ENCODE measurements at regions of chr14 and their contacts with region 1.

Region 1: GRCh38 chr14:68979021-68979782 is at the start of gene ACTN1:
- DNase-seq: peak; percentile 96 to 98 (median 97)
- H3K4me3 ChIP-seq: peak within 1 kb of the TSS; percentile 67 to 89 (median 72)
- H3K27ac ChIP-seq: peak within 1 kb of the TSS; percentile 74 to 95 (median 92)
- H3K4me1 ChIP-seq: peaks cover 29 to 51% of the 10 kb centered on the region in 2 donors
- H3K27me3 ChIP-seq: no peaks in the 10 kb centered on the region
- CTCF ChIP-seq: peak in 1 of 6 experiments; percentile 6
- POLR2A ChIP-seq: peak; percentile 95 to 98
- total RNA-seq, gene ACTN1: 11.6 to 180 (median 95.3) TPM

Region 2: DNA sequence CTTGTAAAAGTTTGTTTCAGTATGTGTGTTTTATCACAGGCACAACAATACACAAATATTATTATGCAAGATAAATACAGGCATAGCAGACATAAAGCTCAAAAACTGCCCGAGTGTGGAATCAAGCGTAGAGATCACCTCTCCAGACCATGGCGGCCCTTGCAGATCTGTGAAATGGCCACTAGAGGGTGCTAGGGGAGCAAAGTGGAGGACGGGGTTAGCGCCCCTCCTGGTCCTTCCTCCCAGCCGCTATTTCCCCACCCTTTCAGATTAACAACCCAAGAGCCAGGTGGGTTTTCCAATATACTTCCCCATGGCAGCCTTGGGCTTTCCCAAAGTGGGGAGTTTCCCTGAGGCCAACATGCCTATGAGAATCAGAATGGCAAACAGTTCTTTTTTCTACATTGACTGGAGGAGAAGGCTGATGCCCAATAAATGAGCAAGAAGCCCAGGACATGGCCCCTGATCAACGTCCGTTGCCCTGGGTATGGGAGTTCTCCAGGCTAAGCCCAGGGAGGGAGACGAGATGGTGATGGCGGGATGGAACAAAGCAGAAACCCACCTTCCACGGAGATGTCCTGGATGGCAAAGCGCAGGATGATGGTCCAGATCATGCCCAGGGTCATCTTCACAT is 67.5 kb before region 1 on chr14:
- intact Hi-C with region 1: loop called in 1 of 2 experiments (anchors 10 kb)
- DNase-seq: peak; percentile 64 to 86 (median 72)
- H3K4me3 ChIP-seq: no peak overlapping the region
- H3K27ac ChIP-seq: no peak overlapping the region
- H3K4me1 ChIP-seq: no peaks in the 10 kb centered on the region
- H3K27me3 ChIP-seq: no peaks in the 10 kb centered on the region
- CTCF ChIP-seq: peak; percentile 94 to 98 (median 96)
- POLR2A ChIP-seq: no peak

Region 3: GRCh38 chr14:69048456-69048855 is 69.3 kb after region 1 on chr14:
- intact Hi-C with region 1: loop called in 1 of 2 experiments (anchors 5 kb)
- DNase-seq: peak; percentile 46 to 85 (median 76)
- H3K4me3 ChIP-seq: no peak overlapping the region
- H3K27ac ChIP-seq: peak overlapping the region in 1 of 5 donors; percentile 93
- H3K4me1 ChIP-seq: peaks cover 62 to 94% of the 10 kb centered on the region in 2 donors
- H3K27me3 ChIP-seq: no peaks in the 10 kb centered on the region
- CTCF ChIP-seq: no peak
- POLR2A ChIP-seq: no peak

Region 4: GRCh38 chr14:69090187-69090789 is 111.1 kb after region 1 on chr14:
- intact Hi-C with region 1: loop called in 1 of 2 experiments (anchors 10 kb)
- DNase-seq: peak in 1 of 7 donors; percentile 43
- H3K4me3 ChIP-seq: no peak overlapping the region
- H3K27ac ChIP-seq: no peak overlapping the region
- H3K4me1 ChIP-seq: peaks cover 11 to 39% of the 10 kb centered on the region in 2 donors
- H3K27me3 ChIP-seq: no peaks in the 10 kb centered on the region
- CTCF ChIP-seq: peak; percentile 29 to 63 (median 54)
- POLR2A ChIP-seq: no peak

Region 5: DNA sequence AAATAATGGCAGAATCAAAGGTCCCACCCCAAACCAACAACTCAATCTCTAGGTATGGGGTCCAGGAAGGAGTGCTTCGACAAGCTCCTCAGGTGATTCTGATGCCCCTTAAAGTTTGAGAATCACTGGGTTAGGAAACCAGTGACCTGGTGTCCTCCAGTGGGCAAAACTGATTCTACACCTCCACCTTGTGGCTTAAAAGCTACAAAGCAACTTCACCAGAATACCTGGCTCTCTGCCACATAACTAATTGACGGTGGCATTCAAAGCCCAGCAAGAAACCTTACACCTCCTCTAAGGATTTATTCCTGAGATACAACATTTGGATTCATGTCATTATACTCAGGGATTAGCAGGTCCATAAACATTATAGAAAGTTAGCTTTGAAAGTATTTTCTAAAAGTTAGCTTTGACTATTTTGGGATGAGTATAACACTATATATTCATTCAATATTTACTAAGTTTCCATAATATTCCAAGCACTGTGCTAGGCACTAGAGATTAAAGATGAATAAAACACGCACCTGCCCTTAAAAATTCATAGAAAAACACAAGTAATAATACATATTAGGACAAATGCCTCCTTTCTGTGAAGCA is 128.3 kb after region 1 on chr14:
- intact Hi-C with region 1: loop called in 1 of 2 experiments (anchors 10 kb)
- DNase-seq: peak; percentile 40 to 73 (median 54)
- H3K4me3 ChIP-seq: no peak overlapping the region
- H3K27ac ChIP-seq: no peak overlapping the region
- H3K4me1 ChIP-seq: peaks cover 0 to 18% of the 10 kb centered on the region in 2 donors
- H3K27me3 ChIP-seq: no peaks in the 10 kb centered on the region
- CTCF ChIP-seq: peak; percentile 43 to 87 (median 81)
- POLR2A ChIP-seq: no peak

Measured in adrenal gland (tissue), 19 donors.